Activated CD4-positive, alpha-beta T cell treated with anti-CD3 and anti-CD28 coated beads, Interleukin-2, amount 10 ng/mL, durations not matched to agents 24 days and 14 days (primary cell): ENCODE measurements at regions of chr3 and their contacts with region 1.

Region 1: GRCh38 chr3:57100046-57100695 is 39.7 kb downstream of the SPATA12 start:
- DNase-seq: peak; percentile 89
- H3K4me3 Mint-ChIP-seq: no peak overlapping the region
- H3K27ac Mint-ChIP-seq: no peak overlapping the region
- H3K4me1 Mint-ChIP-seq: no peaks in the 10 kb centered on the region
- H3K27me3 Mint-ChIP-seq: peaks cover 8% of the 10 kb centered on the region

Region 2: GRCh38 chr3:57164657-57165573 is 64.7 kb after region 1 on chr3 and contains the start of gene IL17RD:
- intact Hi-C with region 1: loop called (anchors 5 kb)
- DNase-seq: peak; percentile 80
- H3K4me3 Mint-ChIP-seq: peak within 1 kb of the TSS; percentile 88
- H3K27ac Mint-ChIP-seq: peak within 1 kb of the TSS; percentile 26
- H3K4me1 Mint-ChIP-seq: peaks cover 8% of the 10 kb centered on the region
- H3K27me3 Mint-ChIP-seq: peaks cover 73% of the 10 kb centered on the region
- total RNA-seq, gene IL17RD: 0.14 and 0.26 TPM in 2 replicates